BJ (cell line): ENCODE measurements at regions of chr1 and their contacts with region 1.

Region 1: DNA sequence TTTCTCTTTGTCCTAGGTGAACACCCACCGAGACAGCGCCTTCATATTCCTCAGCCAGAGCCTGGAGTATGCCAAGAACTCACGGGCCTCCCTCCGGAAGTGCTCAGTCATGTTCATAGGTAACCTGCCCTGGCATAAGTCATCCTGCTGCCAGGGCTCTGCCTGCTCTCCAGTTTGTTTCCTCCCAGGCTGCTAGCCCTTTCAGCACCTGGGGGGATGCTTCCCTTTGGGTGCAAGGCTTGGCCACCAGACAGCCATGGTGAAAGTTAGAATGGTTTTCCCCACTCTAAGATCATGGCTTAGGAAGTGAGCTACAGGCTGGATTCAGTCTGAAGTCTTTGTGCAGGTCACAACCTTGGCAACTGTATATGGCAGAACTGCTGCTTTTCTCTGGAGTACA is 9.2 kb upstream of the TTC4 start:
- DNase-seq: no peak
- H3K4me3 ChIP-seq: no peak overlapping the region
- H3K27me3 ChIP-seq: peaks cover 8% of the 10 kb centered on the region
- CTCF ChIP-seq: no peak

Region 2: DNA sequence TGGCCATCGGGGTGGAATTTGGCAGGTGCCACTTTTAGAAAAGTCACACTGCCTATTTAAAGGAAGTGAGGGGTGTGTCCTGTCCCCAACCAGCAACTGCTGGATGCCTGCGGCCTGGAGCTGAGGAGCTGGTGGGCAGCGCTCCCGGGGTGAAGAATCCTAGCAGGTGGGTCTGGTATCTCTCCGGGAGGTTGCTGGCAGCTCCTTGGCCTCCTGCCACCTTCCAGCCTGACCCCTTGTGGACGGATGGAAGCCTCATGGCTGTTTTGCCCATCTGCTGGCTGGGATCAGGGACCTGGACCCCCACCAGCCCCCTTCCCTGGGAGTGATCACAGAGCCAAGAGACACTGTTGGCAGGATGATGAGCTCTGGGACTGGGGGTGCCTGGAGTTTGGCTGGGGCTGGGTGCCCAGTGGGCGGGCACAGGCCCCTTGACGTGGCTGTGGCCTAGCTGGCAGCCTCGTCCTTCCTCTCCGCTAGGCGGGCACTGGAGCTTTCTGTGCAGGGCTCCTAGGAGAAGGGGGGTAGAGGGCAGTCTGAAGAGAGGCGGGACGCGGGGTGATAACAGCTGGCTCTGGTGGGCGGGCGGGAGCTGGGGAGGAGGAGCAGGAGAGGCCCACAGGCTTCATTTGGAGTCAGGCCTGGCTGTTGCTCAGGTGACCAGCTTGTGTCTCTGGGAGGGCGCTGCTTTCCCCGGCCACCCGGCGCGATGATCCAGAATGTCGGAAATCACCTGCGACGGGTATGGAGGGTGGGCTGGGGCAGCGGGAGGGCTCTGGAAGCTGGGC is 158.6 kb before region 1 on chr1 and contains the start of gene ACOT11:
- CTCF ChIA-PET with region 1: no interaction called
- POLR2A ChIA-PET with region 1: interaction called, 13 read pairs
- DNase-seq: no peak
- H3K4me3 ChIP-seq: no peak within 1 kb of the TSS; the same call in 1 of the 2 replicates
- H3K27me3 ChIP-seq: no peaks in the 10 kb centered on the region
- CTCF ChIP-seq: peak; percentile 58
- polyA plus RNA-seq, gene ACOT11: 1.5 and 2.4 TPM in 2 replicates

Region 3: DNA sequence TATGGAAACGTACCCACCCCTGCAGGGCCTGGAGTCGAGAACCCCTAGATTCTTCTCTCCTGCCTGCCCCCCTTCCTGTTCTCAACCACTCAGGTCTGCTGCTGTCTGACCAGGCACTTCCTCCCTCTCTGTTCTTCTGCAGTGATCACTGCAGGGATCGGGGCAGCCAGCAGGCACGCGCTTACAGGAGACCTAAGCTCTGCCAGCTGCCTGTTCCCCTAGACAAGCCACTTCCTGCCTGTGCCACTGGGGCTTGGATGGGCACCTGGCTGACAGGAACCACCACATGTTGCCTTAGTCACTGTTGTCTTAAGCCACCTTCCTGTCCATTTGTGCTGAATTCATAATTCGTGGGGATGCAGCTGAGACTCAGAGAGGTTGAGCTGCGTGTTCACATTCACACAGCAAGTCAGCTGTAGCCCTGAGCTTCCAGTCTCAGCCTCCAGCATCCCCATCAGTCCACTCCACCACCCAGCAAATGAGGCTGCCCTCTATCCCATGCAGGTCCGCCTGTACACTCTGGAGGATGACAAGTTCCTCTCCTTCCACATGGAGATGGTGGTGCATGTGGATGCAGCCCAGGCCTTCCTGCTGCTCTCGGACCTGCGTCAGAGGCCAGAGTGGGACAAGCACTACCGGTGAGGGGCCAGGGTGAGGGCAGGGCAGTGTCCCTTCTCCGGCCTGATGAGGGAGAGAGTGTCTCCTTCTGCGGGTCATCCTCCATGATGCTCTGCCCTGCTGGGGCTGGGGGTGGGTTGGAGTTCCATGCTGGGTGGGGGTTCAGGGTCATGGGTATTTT is 101.6 kb before region 1 on chr1:
- CTCF ChIA-PET with region 1: no interaction called
- POLR2A ChIA-PET with region 1: no interaction called
- DNase-seq: no peak
- H3K4me3 ChIP-seq: no peak overlapping the region
- H3K27me3 ChIP-seq: no peaks in the 10 kb centered on the region
- CTCF ChIP-seq: no peak